Activated CD4-positive, alpha-beta T cell treated with anti-CD3 and anti-CD28 coated beads for 36 hours (primary cell): ENCODE measurements at regions of chr16 and their contacts with region 1.

Region 1: GRCh38 chr16:61611847-61612491 is 424.3 kb downstream of the CDH8 start:
- DNase-seq: no peak
- ATAC-seq: no peak
- H3K4me3 Mint-ChIP-seq: no peak overlapping the region
- H3K27ac Mint-ChIP-seq: no peak overlapping the region
- H3K4me1 Mint-ChIP-seq: no peaks in the 10 kb centered on the region
- H3K27me3 Mint-ChIP-seq: no peaks in the 10 kb centered on the region

Region 2: GRCh38 chr16:61344791-61345190 is 267.2 kb before region 1 on chr16:
- CTCF ChIA-PET with region 1: no interaction called
- POLR2A ChIA-PET with region 1: no interaction called
- intact Hi-C with region 1: no loop called
- DNase-seq: no peak
- ATAC-seq: no peak
- H3K4me3 Mint-ChIP-seq: no peak overlapping the region
- H3K27ac Mint-ChIP-seq: no peak overlapping the region
- H3K4me1 Mint-ChIP-seq: no peaks in the 10 kb centered on the region
- H3K27me3 Mint-ChIP-seq: no peaks in the 10 kb centered on the region

Region 3: GRCh38 chr16:61659936-61660335 is 48.0 kb after region 1 on chr16:
- CTCF ChIA-PET with region 1: no interaction called
- POLR2A ChIA-PET with region 1: no interaction called
- intact Hi-C with region 1: loop called in 1 of 2 experiments (anchors 5 kb)
- DNase-seq: no peak
- ATAC-seq: no peak
- H3K4me3 Mint-ChIP-seq: no peak overlapping the region
- H3K27ac Mint-ChIP-seq: no peak overlapping the region
- H3K4me1 Mint-ChIP-seq: no peaks in the 10 kb centered on the region
- H3K27me3 Mint-ChIP-seq: no peaks in the 10 kb centered on the region